ENCODE measurements at regions of chr4 and their contacts with region 1.

Region 1: DNA sequence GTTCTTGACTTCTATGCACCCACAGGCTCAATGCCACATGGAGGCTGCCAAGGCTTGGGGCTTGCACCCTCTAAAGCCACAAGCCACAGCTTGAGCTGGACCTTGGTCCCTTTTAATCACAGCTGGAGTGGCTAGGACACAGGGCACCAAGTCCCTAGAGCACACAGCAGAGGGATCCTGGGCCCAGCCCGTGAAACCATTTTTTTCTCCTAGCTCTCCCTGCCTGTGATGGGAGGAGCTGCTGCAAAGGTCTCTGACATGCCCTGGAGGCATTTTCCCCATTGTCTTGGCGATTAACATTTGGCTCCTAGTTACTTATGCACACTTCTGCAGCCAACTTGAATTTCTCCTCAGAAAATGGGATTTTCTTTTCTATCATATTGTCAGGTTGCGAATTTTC is 410.9 kb downstream of the GRID2 start:
- DNase-seq: no peak
- ATAC-seq: no peak
- H3K4me3 ChIP-seq: no peak overlapping the region
- H3K27ac ChIP-seq: no peak overlapping the region
- H3K4me1 ChIP-seq: no peaks in the 10 kb centered on the region
- H3K27me3 ChIP-seq: no peaks in the 10 kb centered on the region
- CTCF ChIP-seq: no peak

Region 2: GRCh38 chr4:92760433-92760832 is 45.8 kb after region 1 on chr4:
- CTCF ChIA-PET with region 1: no interaction called
- POLR2A ChIA-PET with region 1: interaction called, 12 read pairs
- in situ Hi-C with region 1: no loop called
- intact Hi-C with region 1: no loop called
- DNase-seq: no peak
- ATAC-seq: no peak
- H3K4me3 ChIP-seq: no peak overlapping the region
- H3K27ac ChIP-seq: no peak overlapping the region
- H3K4me1 ChIP-seq: no peaks in the 10 kb centered on the region
- H3K27me3 ChIP-seq: no peaks in the 10 kb centered on the region
- CTCF ChIP-seq: no peak

Measured in Panc1 (cell line).